ENCODE measurements at regions of chr15 and their contacts with region 1.

Region 1: GRCh38 chr15:59138243-59138642 is 33.3 kb downstream of the CCNB2 start:
- DNase-seq: peak; percentile 22
- ATAC-seq: peak; percentile 77
- H3K4me3 ChIP-seq: no peak overlapping the region
- H3K27ac ChIP-seq: no peak overlapping the region
- H3K4me1 ChIP-seq: no peaks in the 10 kb centered on the region
- H3K27me3 ChIP-seq: no peaks in the 10 kb centered on the region
- CTCF ChIP-seq: peak; percentile 59
- POLR2A ChIP-seq: no peak
- RAD21 ChIP-seq: peak; percentile 38

Region 2: DNA sequence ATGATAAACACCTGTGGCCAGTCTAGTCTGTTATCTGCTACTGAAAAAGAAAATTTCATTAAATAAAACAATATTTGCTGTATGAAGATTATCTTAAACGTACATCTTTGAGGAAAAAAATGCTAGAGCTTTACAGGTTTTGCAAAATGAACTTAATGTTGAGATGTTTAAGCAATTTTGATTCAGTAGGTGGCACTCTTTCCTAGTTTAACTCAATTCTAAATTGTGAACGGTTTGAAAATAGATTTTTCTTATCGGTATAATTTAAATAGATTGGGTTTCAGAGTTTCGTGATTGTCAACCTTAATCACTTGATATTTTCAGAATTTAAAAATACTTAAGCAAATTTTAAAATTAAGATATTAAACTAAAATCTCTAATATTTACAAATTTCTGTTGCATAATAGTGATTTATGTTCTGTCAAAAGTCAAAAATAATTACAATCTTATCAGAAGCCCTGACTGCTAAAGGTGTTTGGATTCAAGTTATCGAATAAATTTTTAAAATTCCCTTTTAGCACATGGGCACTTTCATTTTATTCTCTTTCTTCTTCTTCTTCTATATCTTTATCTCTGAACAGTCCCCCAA is 157.8 kb before region 1 on chr15:
- CTCF ChIA-PET with region 1: no interaction called
- POLR2A ChIA-PET with region 1: no interaction called
- dilution Hi-C with region 1: no loop called
- in situ Hi-C with region 1: no loop called
- intact Hi-C with region 1: loop called (anchors 1 kb)
- DNase-seq: peak; percentile 56
- ATAC-seq: 0 out of 2 replicates have a peak, but pooled peaks have one; percentile 24
- H3K4me3 ChIP-seq: no peak overlapping the region
- H3K27ac ChIP-seq: no peak overlapping the region
- H3K4me1 ChIP-seq: no peaks in the 10 kb centered on the region
- H3K27me3 ChIP-seq: no peaks in the 10 kb centered on the region
- CTCF ChIP-seq: peak; percentile 67
- POLR2A ChIP-seq: no peak
- RAD21 ChIP-seq: peak; percentile 68

Region 3: GRCh38 chr15:59208850-59209249 is 70.6 kb after region 1 on chr15:
- CTCF ChIA-PET with region 1: no interaction called
- POLR2A ChIA-PET with region 1: no interaction called
- dilution Hi-C with region 1: no loop called
- in situ Hi-C with region 1: no loop called
- intact Hi-C with region 1: no loop called
- DNase-seq: no peak
- ATAC-seq: no peak
- H3K4me3 ChIP-seq: no peak overlapping the region
- H3K27ac ChIP-seq: no peak overlapping the region
- H3K4me1 ChIP-seq: no peaks in the 10 kb centered on the region
- H3K27me3 ChIP-seq: no peaks in the 10 kb centered on the region
- CTCF ChIP-seq: no peak
- POLR2A ChIP-seq: no peak
- RAD21 ChIP-seq: no peak

Region 4: GRCh38 chr15:59388670-59389069 is 250.4 kb after region 1 on chr15:
- CTCF ChIA-PET with region 1: no interaction called
- POLR2A ChIA-PET with region 1: no interaction called
- dilution Hi-C with region 1: no loop called
- in situ Hi-C with region 1: no loop called
- intact Hi-C with region 1: no loop called
- DNase-seq: peak; percentile 70
- ATAC-seq: peak; percentile 57
- H3K4me3 ChIP-seq: no peak overlapping the region
- H3K27ac ChIP-seq: peak overlapping the region; percentile 56; the same call in 1 of the 2 replicates
- H3K4me1 ChIP-seq: peaks cover 2% of the 10 kb centered on the region
- H3K27me3 ChIP-seq: no peaks in the 10 kb centered on the region; the same call in 1 of the 2 replicates
- CTCF ChIP-seq: no peak
- POLR2A ChIP-seq: no peak
- RAD21 ChIP-seq: no peak

Measured in IMR-90 (cell line).